HEK293 (cell line): ENCODE measurements at regions of chr2 and their contacts with region 1.

Region 1: DNA sequence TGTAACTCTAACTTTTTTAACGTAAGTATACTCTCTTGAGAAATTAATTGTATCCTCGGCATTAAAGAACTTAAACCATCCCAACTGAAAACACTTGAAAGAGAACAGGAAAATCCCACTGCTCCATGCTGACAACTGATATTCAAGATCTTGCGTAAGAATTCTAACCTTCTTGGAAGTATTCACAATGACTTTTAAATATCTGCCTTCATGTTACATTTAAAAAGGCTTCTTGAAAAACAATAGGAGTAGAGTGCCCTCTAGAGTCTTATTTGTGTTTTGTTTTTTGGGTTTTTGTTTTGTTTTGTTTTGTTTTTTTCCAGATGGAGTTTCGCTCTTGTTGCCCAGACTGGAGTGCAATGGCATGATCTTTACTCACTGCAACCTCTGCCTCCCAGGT is 65.4 kb upstream of the DNAJC10 start:
- H3K4me3 ChIP-seq: no peak overlapping the region
- H3K27ac ChIP-seq: no peak overlapping the region
- H3K4me1 ChIP-seq: no peaks in the 10 kb centered on the region
- CTCF ChIP-seq: peak; percentile 55; the same call in 1 of the 2 replicates

Region 2: DNA sequence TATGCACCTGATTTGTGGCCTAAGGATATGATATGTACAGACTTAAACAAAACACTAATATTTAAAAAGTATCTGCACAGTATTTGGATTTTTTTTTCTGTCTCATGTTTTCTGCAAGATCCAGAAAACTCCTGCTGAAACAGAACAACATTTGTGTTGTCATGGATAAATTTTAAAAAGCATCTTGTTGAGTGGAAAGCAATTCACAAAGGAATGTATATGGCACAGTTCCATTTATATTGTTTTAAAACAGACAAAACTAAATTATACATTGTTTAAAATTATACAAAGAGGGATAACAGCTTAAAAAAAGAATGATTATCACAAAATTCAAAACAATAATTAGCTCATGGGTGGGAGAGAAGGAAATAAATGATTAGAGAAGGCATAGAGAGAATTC is 471.5 kb before region 1 on chr2:
- CTCF ChIA-PET with region 1: interaction called, 106 read pairs
- POLR2A ChIA-PET with region 1: no interaction called
- H3K4me3 ChIP-seq: no peak overlapping the region
- H3K27ac ChIP-seq: no peak overlapping the region
- H3K4me1 ChIP-seq: no peaks in the 10 kb centered on the region
- CTCF ChIP-seq: no peak

Region 3: DNA sequence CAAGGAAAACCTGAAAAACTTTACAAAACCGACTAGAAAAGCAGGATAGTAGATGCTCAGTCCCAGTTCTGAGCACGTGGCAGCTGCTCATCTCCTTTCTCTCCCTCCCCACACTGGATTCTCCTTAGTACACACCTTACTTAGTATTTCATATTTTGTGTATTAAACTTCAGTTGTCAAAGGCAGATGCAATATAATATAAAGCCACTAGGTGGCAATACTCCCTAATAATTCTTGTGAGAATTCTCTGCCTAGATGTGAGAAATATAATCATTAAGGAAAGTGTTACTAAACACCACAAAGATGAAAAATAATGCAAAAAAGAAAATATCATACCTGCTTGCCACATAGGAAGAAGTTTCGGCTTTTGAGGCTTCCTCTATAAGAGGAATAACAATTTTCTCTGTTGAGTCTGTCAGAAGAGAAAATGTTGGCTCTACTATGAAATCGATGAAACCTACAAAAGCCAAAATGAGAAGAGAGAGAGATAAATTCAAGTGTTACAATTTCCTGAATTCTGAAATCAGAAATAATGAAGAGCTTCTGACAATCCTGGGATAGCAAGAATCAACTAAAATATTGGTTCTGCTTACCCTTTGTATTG is 464.5 kb before region 1 on chr2:
- CTCF ChIA-PET with region 1: interaction called, 106 read pairs
- POLR2A ChIA-PET with region 1: no interaction called
- H3K4me3 ChIP-seq: no peak overlapping the region
- H3K27ac ChIP-seq: no peak overlapping the region
- H3K4me1 ChIP-seq: no peaks in the 10 kb centered on the region
- CTCF ChIP-seq: peak; percentile 59; the same call in 1 of the 2 replicates

Region 4: DNA sequence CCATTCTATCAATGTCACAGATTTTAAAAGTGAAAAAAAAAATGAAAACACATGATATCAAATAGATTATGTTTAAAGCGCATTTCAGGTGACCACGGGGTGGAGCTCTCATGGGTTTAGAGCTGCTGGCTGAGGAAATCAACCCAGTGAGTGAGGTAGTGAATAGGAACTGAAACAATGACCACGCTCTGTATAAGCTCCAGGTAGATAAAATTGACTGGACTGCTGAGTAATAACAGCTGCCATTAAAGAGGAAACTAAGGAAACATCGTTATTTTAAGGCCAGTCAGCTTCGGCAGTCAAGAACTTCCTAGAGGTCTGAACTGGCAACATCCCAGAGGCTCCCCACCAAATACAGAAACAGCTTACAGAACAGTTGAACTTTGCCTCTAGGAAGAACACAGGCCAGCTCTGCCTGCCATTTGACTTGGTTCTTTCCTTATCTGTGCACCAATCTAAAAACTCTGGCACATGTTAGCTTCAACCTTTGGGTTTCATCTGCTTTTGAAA is 409.8 kb before region 1 on chr2:
- CTCF ChIA-PET with region 1: interaction called, 21 read pairs
- POLR2A ChIA-PET with region 1: no interaction called
- H3K4me3 ChIP-seq: no peak overlapping the region
- H3K27ac ChIP-seq: no peak overlapping the region
- H3K4me1 ChIP-seq: no peaks in the 10 kb centered on the region
- CTCF ChIP-seq: no peak

Region 5: DNA sequence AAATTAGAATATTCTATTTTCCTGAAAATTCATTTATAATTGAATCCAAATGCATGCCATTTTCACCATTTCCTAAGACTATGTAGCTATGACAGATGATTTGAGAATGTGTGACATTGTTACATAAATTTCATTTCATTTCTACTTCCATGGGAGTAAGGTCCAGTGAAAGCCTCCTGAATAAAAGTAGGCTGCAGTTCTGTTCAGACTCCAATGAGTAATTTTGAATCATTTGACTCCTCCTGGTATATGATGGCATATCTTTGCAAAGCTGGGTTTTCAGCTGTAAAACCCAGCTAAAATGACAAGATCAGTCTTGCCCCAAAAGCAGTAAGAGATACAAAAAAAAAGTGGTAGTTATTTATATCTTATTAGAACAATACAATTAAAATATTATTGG is 35.7 kb before region 1 on chr2:
- CTCF ChIA-PET with region 1: interaction called, 16 read pairs
- POLR2A ChIA-PET with region 1: no interaction called
- H3K4me3 ChIP-seq: no peak overlapping the region
- H3K27ac ChIP-seq: no peak overlapping the region
- H3K4me1 ChIP-seq: peaks cover 6% of the 10 kb centered on the region
- CTCF ChIP-seq: no peak

Region 6: DNA sequence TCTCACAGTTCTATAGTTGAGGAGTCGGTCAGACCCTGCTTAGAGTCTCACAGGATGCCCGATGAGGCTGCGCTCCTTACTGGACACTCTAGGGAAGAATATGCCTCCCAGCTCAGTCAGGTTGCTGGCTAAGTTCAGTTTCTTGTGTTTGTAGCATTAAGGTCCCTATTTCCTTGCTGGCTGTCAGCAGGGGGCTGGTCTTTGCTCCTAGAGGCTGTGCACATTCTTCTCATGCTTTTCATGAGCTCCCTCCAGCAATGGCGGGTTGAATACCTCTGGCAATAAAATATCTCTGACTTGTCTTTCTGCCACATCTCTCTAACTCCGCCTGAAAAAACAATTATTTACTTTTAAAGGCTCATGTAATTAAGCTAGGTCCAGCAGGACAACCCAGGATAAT is 14.0 kb before region 1 on chr2:
- CTCF ChIA-PET with region 1: interaction called, 14 read pairs
- POLR2A ChIA-PET with region 1: no interaction called
- H3K4me3 ChIP-seq: no peak overlapping the region
- H3K27ac ChIP-seq: no peak overlapping the region
- H3K4me1 ChIP-seq: no peaks in the 10 kb centered on the region
- CTCF ChIP-seq: no peak